Activated T-helper 1 cell treated with anti-CD3 and anti-CD28 coated beads, Interleukin-12 subunit alpha, Interleukin-12 subunit beta, Interleukin-2, Interleukin-4 antibody, amounts not matched to agents 30 ng/mL and 10 ng/mL and 1 ng/mL, durations not matched to agents 14 hours and 24 hours and 36 hours (primary cell): ENCODE measurements at regions of chr3 and their contacts with region 1.

Region 1: GRCh38 chr3:38164966-38165680 is at the start of gene OXSR1:
- DNase-seq: peak; percentile 96
- H3K4me3 Mint-ChIP-seq: peak within 1 kb of the TSS; percentile 98
- H3K27ac Mint-ChIP-seq: peak within 1 kb of the TSS; percentile 100
- H3K4me1 Mint-ChIP-seq: peaks cover 43% of the 10 kb centered on the region
- H3K27me3 Mint-ChIP-seq: no peaks in the 10 kb centered on the region
- total RNA-seq, gene OXSR1: 48.6 and 50.8 TPM in 2 replicates

Region 2: GRCh38 chr3:37397396-37397795 is 767.7 kb before region 1 on chr3:
- intact Hi-C with region 1: no loop called
- DNase-seq: no peak
- H3K4me3 Mint-ChIP-seq: no peak overlapping the region
- H3K27ac Mint-ChIP-seq: no peak overlapping the region
- H3K4me1 Mint-ChIP-seq: no peaks in the 10 kb centered on the region
- H3K27me3 Mint-ChIP-seq: no peaks in the 10 kb centered on the region

Region 3: DNA sequence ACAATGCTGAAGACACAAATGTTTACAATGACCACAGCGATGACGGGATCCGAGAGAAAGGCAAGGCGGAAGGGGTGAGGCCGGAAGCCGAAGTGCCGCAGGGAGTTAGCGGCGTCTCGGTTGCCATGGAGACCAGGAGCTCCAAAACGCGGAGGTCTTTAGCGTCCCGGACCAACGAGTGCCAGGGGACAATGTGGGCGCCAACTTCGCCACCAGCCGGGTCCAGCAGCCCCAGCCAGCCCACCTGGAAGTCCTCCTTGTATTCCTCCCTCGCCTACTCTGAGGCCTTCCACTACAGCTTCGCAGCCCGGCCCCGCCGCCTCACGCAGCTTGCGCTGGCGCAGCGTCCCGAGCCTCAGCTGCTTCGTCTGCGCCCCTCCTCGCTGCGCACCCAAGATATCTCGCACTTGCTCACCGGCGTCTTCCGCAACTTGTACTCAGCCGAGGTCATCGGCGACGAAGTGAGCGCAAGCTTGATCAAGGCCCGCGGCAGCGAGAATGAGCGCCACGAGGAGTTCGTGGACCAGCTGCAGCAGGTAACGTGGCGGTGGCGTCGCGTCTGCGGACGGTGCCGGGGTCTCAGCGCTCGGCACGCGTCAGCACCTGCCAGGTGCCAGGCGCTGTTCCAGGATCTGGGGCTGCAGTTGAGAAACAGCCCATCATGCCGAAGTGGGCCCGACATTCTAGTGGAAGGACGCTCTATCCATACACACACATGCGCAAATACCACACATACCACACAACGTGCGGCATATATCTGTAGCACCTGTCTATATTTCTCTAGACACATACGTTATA is 125.8 kb before region 1 on chr3 and contains the start of gene DLEC1:
- intact Hi-C with region 1: loop called (anchors 1 kb)
- DNase-seq: peak; percentile 84
- H3K4me3 Mint-ChIP-seq: peak within 1 kb of the TSS; percentile 75
- H3K27ac Mint-ChIP-seq: peak within 1 kb of the TSS; percentile 93
- H3K4me1 Mint-ChIP-seq: peaks cover 36% of the 10 kb centered on the region
- H3K27me3 Mint-ChIP-seq: peaks cover 7% of the 10 kb centered on the region
- total RNA-seq, gene DLEC1: 0.10 and 0.12 TPM in 2 replicates

Region 4: DNA sequence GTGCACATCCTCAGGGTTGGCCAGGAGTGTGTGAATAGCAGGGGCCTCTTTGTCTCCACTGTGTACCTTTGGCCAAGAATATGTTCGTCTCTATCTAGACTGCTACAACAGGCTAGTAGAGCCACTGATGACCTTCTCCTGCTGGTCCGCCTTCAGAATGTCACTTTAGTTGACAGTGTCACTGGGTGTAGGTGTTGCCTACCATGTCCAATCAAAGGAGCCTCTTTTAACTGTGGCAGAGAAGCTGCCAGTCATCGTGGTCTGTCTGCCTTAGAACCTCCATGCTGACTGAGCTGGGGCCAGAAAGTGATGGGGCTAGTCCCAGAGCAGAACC is 40.3 kb after region 1 on chr3:
- intact Hi-C with region 1: loop called (anchors 1 kb)
- DNase-seq: peak; percentile 16
- H3K4me3 Mint-ChIP-seq: peak overlapping the region; percentile 38
- H3K27ac Mint-ChIP-seq: peak overlapping the region; percentile 80
- H3K4me1 Mint-ChIP-seq: peaks cover 73% of the 10 kb centered on the region
- H3K27me3 Mint-ChIP-seq: no peaks in the 10 kb centered on the region

Region 5: DNA sequence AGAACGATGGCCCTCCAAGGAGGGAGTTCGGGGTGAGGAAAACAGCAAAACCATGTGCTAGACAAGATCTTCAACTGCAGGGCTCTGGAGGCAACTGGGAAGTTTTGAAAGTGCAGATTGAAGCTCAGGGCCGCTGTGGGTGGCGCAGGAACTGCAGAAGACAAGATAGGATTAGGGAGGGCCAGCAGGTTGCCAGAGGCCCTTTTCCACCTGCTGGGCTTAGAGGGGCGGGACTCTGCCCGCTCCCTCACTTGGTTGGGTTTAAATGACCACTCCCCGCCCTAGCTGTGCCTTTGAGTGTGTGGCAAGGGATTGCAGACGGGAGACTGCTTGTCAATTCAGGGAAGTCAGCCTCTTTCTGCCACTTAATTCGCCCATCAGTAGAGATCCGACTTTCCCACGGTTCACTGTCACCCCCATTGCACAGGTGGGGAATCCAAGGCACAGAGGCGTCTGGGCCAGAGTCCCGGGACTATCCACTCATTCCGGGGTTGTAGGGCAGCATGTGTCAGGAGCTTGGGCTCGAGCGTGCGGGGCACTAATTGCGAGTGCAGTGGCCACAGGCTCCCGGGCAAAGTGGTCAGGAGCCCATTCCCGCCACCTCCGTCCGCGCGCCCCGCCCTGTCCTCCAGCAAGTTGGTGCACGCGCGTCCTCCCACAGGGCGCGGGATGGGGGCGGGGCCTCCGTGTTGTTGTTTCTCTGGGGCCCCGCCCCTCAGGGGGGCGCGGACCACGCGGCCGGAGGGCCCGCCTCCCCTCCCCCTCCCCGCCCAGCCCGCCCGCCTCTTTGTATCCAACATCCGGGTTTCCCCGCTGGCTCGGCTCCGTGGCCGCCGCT is 288.2 kb after region 1 on chr3 and contains the start of gene ACVR2B:
- intact Hi-C with region 1: loop called (anchors 10 kb)
- DNase-seq: peak; percentile 66
- H3K4me3 Mint-ChIP-seq: peak within 1 kb of the TSS; percentile 97
- H3K27ac Mint-ChIP-seq: peak within 1 kb of the TSS; percentile 80
- H3K4me1 Mint-ChIP-seq: peaks cover 10% of the 10 kb centered on the region
- H3K27me3 Mint-ChIP-seq: peaks cover 15% of the 10 kb centered on the region
- total RNA-seq, gene ACVR2B: 10.4 and 10.5 TPM in 2 replicates